Activated CD4-positive, alpha-beta T cell treated with anti-CD3 and anti-CD28 coated beads for 36 hours (primary cell): ENCODE measurements at regions of chr1 and their contacts with region 1.

Region 1: GRCh38 chr1:108691942-108692723 is at the start of gene PRPF38B:
- DNase-seq: peak; percentile 97
- ATAC-seq: peak; percentile 92
- H3K4me3 Mint-ChIP-seq: peak within 1 kb of the TSS; percentile 93
- H3K27ac Mint-ChIP-seq: peak within 1 kb of the TSS; percentile 95
- H3K4me1 Mint-ChIP-seq: peaks cover 38% of the 10 kb centered on the region
- H3K27me3 Mint-ChIP-seq: no peaks in the 10 kb centered on the region
- total RNA-seq, gene PRPF38B: 57.9 to 61.1 TPM

Region 2: DNA sequence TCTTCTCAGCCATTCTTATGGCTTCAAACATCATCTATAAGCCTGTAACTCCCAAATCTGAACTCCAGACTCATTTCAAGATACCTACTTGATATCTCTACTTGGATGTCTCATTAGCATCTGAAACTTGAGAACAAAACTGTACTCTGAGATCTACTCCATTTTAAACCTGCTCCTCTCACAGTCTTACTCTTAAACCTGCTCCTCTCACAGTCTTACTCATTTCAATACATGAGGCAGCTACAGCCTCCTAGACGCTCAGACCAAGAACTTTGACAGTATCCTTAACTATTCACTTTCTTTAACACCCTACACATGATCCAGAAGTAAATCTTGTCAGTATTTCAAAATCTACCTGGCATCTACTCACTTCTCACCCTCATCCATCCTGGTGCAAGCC is 187.7 kb before region 1 on chr1:
- CTCF ChIA-PET with region 1: no interaction called
- POLR2A ChIA-PET with region 1: no interaction called
- intact Hi-C with region 1: loop called in 1 of 2 experiments (anchors 2 kb)
- DNase-seq: peak; percentile 16
- ATAC-seq: peak; percentile 95
- H3K4me3 Mint-ChIP-seq: no peak overlapping the region
- H3K27ac Mint-ChIP-seq: no peak overlapping the region
- H3K4me1 Mint-ChIP-seq: no peaks in the 10 kb centered on the region
- H3K27me3 Mint-ChIP-seq: peaks cover 36% of the 10 kb centered on the region

Region 3: GRCh38 chr1:108643492-108644335 is 48.4 kb before region 1 on chr1:
- CTCF ChIA-PET with region 1: interaction called, 11 read pairs
- POLR2A ChIA-PET with region 1: interaction called, 6 read pairs
- intact Hi-C with region 1: loop called (anchors 1 kb)
- DNase-seq: peak; percentile 64
- ATAC-seq: peak; percentile 47
- H3K4me3 Mint-ChIP-seq: no peak overlapping the region
- H3K27ac Mint-ChIP-seq: peak overlapping the region; percentile 72
- H3K4me1 Mint-ChIP-seq: peaks cover 71% of the 10 kb centered on the region
- H3K27me3 Mint-ChIP-seq: no peaks in the 10 kb centered on the region

Region 4: DNA sequence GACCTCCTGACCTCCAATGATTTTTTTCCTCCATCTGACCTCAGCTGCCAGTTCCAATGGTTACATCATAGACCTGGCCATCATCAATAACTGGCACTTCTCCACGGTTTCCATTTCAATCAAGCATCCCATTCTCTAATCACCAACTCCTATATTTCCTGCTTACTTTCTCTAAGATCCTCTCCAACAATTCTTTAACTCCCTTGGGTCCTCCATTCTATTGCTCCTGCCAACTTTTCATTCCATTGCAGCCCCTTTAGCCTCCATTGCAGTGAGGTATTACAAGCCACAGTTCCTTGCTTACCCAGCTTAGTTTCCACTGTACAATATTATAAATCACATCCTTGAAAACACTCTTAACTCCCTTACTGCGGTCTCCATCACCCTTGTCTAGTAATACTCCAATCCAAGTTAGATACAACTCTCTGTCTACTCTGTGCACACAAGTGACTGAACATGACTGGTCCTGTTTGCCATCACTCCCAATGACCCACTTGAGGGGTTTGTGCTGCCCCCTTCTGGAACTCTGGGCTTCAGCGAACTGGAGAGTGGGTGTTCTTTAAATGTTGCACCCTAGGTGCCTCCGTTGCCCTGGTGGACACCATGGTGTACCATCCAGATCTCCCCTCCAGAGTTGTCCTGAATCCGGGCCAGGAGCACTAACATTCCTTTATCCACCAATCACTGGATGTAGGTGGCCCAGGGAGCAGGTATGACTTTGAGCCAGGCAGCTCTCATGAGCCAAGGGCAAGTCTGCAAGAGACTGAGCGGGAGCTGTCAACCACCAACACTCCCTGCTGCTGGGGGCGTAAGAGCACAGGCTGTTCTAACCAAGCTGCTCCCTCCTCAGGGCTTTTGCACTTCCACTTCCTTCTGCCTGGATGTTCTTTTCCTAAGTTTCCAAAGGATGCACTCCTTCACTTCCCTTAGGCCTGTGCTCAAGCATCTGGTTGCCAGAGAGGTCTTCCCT is 16.8 kb after region 1 on chr1:
- CTCF ChIA-PET with region 1: interaction called, 5 read pairs
- POLR2A ChIA-PET with region 1: interaction called, 25 read pairs
- intact Hi-C with region 1: loop called (anchors 1 kb)
- DNase-seq: peak; percentile 78
- ATAC-seq: peak; percentile 86
- H3K4me3 Mint-ChIP-seq: no peak overlapping the region
- H3K27ac Mint-ChIP-seq: no peak overlapping the region
- H3K4me1 Mint-ChIP-seq: peaks cover 25% of the 10 kb centered on the region
- H3K27me3 Mint-ChIP-seq: no peaks in the 10 kb centered on the region

Region 5: DNA sequence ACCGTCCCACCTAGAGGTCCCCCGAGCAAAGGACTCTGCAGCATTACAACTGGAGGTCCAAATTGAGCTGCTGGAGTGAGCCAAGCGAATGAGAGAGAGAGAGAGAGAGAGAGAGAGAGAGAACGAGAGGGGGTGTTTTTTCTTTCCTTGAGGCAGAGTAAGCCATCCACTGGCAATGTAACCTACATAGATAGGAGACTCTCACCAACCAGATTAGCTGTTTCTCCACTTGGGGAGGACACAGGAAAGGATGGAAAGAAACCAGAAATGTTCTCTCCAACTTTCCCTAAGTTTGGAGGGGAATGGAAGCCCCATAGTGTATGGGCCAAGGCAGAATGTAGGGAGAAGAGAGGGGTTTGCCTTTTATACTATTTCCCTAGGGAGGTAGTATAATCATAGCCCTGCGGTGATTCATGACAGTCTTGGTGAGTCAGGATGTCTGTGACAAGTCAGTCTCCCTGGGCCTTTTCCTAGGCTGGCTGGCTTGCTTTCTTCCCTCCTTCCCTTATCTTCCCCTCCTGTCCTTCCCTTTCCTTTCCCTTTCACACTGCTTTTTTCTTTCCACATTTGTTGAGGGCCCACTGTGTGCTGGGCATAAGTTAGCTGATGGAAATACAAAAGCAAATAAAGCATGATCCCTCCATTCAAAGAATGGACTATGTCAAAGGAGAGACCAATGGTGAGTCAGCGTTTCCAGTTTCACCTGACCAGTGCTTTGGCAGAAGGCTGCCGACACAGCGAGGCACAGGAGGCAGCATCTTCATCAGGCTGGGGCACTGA is 27.7 kb after region 1 on chr1:
- CTCF ChIA-PET with region 1: no interaction called
- POLR2A ChIA-PET with region 1: no interaction called
- intact Hi-C with region 1: no loop called
- DNase-seq: no peak
- ATAC-seq: peak; percentile 68
- H3K4me3 Mint-ChIP-seq: no peak overlapping the region
- H3K27ac Mint-ChIP-seq: no peak overlapping the region
- H3K4me1 Mint-ChIP-seq: peaks cover 3% of the 10 kb centered on the region
- H3K27me3 Mint-ChIP-seq: no peaks in the 10 kb centered on the region

Region 6: DNA sequence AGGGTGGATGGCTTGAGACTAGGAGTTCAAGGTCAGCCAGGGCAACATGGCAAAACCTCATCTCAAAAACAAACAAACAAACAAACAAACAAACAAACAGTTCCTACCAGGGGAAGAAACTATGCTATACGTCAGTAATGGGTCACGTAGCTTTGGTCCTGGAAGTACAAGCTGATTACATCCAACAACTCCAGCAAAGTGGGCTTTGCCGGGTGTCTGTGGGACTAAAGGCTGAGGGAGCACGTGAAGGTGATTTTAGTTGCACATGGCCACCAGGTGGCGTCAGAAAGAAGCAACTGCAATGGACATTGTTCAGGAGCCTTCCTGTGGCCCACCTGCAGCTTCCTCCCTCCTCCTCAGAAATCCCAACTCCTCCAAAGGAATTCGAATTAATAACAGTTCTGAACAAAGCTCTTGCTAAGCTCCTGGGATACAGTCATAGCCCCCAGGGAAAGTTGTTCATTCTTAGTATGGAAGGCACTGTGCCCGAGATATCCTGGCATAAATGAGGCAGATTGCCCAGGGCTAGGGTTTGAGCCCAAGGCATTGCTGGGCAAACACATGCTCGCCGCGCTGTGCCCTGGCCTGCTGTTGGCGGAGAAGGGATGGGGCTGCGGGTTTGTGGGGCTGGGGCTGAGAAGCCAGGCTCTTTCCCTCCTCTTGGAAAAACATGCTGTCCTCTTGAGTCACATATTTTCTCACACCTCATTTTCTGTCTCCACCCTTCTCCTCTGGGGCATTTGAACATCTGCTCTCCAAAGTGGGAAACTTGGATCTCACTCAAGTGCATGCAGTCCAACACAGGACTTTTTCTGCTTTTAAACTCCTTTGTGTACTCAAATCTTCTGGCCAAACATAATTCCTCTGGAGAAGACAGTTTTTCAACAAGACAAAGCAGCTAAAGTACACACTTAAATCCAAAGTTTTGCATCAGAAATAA is 136.2 kb after region 1 on chr1:
- CTCF ChIA-PET with region 1: no interaction called
- POLR2A ChIA-PET with region 1: no interaction called
- intact Hi-C with region 1: no loop called
- DNase-seq: peak; percentile 85
- ATAC-seq: peak; percentile 74
- H3K4me3 Mint-ChIP-seq: no peak overlapping the region
- H3K27ac Mint-ChIP-seq: no peak overlapping the region
- H3K4me1 Mint-ChIP-seq: no peaks in the 10 kb centered on the region
- H3K27me3 Mint-ChIP-seq: no peaks in the 10 kb centered on the region

Region 7: DNA sequence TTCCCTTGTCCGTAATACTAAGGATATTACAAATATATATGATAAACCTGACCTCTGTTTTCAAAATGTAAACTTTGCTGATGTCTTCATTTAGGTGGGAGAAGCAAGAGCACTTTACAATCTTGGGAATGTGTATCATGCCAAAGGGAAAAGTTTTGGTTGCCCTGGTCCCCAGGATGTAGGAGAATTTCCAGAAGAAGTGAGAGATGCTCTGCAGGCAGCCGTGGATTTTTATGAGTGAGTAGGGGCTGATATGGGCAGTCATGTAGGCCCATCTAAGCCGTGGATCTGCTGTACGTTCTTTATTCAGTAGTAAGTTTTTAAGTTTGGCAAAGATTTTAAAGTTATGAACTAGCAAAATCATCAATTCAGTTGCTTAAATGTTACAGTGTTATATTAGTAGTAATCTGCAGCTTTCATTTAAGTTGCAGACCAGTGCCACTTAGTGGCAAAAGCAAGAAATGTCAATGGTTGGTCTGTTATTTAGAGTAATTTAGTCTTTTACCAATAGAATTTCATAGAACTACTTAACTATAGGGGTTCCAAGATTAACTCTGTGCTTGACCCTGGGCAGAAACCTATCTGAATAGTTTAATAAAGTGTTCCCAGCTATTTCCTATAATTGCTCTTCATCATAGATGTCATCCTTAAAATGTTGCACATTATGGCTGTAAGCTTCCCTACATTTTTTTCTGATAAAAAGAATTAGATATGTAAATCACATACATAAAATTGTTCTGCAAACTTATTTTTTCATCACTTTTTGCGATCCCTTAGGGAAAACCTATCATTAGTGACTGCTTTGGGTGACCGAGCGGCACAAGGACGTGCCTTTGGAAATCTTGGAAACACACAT is 206.0 kb after region 1 on chr1:
- CTCF ChIA-PET with region 1: no interaction called
- POLR2A ChIA-PET with region 1: no interaction called
- intact Hi-C with region 1: loop called (anchors 2 to 10 kb)
- DNase-seq: peak; percentile 24
- ATAC-seq: peak; percentile 70
- H3K4me3 Mint-ChIP-seq: no peak overlapping the region
- H3K27ac Mint-ChIP-seq: no peak overlapping the region
- H3K4me1 Mint-ChIP-seq: no peaks in the 10 kb centered on the region
- H3K27me3 Mint-ChIP-seq: no peaks in the 10 kb centered on the region

Region 8: GRCh38 chr1:109090196-109091077 is 398.3 kb after region 1 on chr1 and contains the start of gene TMEM167B:
- CTCF ChIA-PET with region 1: no interaction called
- POLR2A ChIA-PET with region 1: no interaction called
- intact Hi-C with region 1: loop called in 1 of 2 experiments (anchors 2 kb)
- DNase-seq: peak; percentile 95
- ATAC-seq: peak; percentile 88
- H3K4me3 Mint-ChIP-seq: peak within 1 kb of the TSS; percentile 85
- H3K27ac Mint-ChIP-seq: peak within 1 kb of the TSS; percentile 84
- H3K4me1 Mint-ChIP-seq: peaks cover 30% of the 10 kb centered on the region
- H3K27me3 Mint-ChIP-seq: no peaks in the 10 kb centered on the region
- total RNA-seq, gene TMEM167B: 26.8 to 28.4 TPM

Region 9: GRCh38 chr1:109161858-109162606 is 469.9 kb after region 1 on chr1:
- CTCF ChIA-PET with region 1: no interaction called
- POLR2A ChIA-PET with region 1: no interaction called
- intact Hi-C with region 1: no loop called
- DNase-seq: peak; percentile 69
- ATAC-seq: peak; percentile 95
- H3K4me3 Mint-ChIP-seq: no peak overlapping the region
- H3K27ac Mint-ChIP-seq: peak overlapping the region; percentile 34
- H3K4me1 Mint-ChIP-seq: peaks cover 23% of the 10 kb centered on the region
- H3K27me3 Mint-ChIP-seq: no peaks in the 10 kb centered on the region

Region 10: GRCh38 chr1:109213785-109214468 is 521.8 kb after region 1 on chr1 and contains the start of gene SARS1:
- CTCF ChIA-PET with region 1: no interaction called
- POLR2A ChIA-PET with region 1: no interaction called
- intact Hi-C with region 1: loop called in 1 of 2 experiments (anchors 1 kb)
- DNase-seq: peak; percentile 93
- ATAC-seq: peak; percentile 85
- H3K4me3 Mint-ChIP-seq: peak within 1 kb of the TSS; percentile 97
- H3K27ac Mint-ChIP-seq: peak within 1 kb of the TSS; percentile 95
- H3K4me1 Mint-ChIP-seq: peaks cover 32% of the 10 kb centered on the region
- H3K27me3 Mint-ChIP-seq: peaks cover 1% of the 10 kb centered on the region
- total RNA-seq, gene SARS1: 224 to 240 TPM